PC-9 (cell line): ENCODE measurements at regions of chr1 and their contacts with region 1.

Region 1: GRCh38 chr1:232725305-232726047 is 79.7 kb upstream of the MAP10 start:
- DNase-seq: no peak
- H3K4me3 ChIP-seq: no peak overlapping the region
- H3K27ac ChIP-seq: no peak overlapping the region
- H3K4me1 ChIP-seq: peaks cover 14% of the 10 kb centered on the region; the same call in 1 of the 2 replicates
- H3K27me3 ChIP-seq: peaks cover 24% of the 10 kb centered on the region
- CTCF ChIP-seq: 0 out of 2 replicates have a peak, but pooled peaks have one; percentile 21

Region 2: DNA sequence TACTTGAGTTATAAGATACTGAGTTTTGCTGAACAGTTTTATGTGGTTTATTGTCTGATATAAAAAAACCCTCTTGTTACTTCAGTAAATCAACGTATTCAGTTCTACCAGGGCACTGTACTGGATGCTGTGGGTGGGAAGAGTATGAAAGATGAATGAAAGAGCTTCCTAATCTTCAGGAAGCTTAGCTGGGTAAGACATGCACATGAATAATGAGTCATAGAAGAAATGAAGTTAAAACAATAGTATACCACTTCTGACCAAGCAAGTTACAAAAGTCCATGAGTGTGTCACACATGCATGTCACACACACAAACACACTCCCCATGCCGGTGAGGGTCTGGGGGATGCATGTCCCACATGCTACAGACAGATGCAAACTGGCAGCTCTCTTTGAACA is 201.4 kb before region 1 on chr1:
- CTCF ChIA-PET with region 1: no interaction called
- POLR2A ChIA-PET with region 1: interaction called, 23 read pairs
- intact Hi-C with region 1: no loop called
- DNase-seq: no peak
- H3K4me3 ChIP-seq: no peak overlapping the region
- H3K27ac ChIP-seq: no peak overlapping the region
- H3K4me1 ChIP-seq: peaks cover 10% of the 10 kb centered on the region
- H3K27me3 ChIP-seq: no peaks in the 10 kb centered on the region
- CTCF ChIP-seq: no peak

Region 3: DNA sequence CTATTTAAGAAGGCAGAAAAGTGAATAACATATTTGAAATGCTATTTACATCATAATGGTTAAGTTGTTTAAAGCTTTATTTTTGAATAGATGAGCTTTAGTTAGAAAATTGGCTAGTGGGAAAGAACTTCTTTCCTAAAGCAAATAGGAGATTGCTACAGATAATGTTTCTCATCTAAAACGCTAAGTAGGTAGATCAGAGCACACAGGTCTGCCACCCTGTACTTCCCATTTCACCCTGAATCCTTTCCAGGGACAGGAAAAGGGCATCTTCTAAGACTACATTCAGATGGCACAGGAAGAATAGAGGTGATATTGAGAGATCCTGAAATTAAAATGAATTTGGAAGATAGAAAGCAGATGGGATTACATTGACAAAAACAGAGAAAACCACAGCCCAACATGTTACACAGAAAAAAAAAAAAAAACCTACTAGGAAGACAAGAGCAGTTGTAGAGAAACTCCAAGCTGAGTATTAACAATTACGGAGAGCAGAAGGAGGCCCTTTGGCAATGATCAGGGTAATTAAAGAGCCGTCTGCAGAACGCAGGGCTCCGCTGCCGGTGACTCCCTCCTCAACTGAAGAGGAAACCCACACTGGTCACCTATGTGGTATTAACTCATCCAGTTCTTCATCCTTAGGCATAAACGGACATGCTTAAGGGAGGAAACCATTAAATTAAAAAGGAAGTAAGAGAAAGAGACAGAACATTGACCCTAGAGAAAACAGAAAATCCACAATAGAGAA is 26.1 kb after region 1 on chr1:
- CTCF ChIA-PET with region 1: no interaction called
- POLR2A ChIA-PET with region 1: no interaction called
- intact Hi-C with region 1: no loop called
- DNase-seq: no peak
- H3K4me3 ChIP-seq: no peak overlapping the region
- H3K27ac ChIP-seq: no peak overlapping the region
- H3K4me1 ChIP-seq: no peaks in the 10 kb centered on the region
- H3K27me3 ChIP-seq: no peaks in the 10 kb centered on the region
- CTCF ChIP-seq: no peak

Region 4: GRCh38 chr1:232904566-232904965 is 179.1 kb after region 1 on chr1:
- CTCF ChIA-PET with region 1: no interaction called
- POLR2A ChIA-PET with region 1: no interaction called
- intact Hi-C with region 1: no loop called
- DNase-seq: no peak
- H3K4me3 ChIP-seq: no peak overlapping the region
- H3K27ac ChIP-seq: no peak overlapping the region
- H3K4me1 ChIP-seq: no peaks in the 10 kb centered on the region
- H3K27me3 ChIP-seq: 0 out of 2 replicates have a peak, but pooled peaks cover 4% of the 10 kb centered on the region
- CTCF ChIP-seq: no peak

Region 5: DNA sequence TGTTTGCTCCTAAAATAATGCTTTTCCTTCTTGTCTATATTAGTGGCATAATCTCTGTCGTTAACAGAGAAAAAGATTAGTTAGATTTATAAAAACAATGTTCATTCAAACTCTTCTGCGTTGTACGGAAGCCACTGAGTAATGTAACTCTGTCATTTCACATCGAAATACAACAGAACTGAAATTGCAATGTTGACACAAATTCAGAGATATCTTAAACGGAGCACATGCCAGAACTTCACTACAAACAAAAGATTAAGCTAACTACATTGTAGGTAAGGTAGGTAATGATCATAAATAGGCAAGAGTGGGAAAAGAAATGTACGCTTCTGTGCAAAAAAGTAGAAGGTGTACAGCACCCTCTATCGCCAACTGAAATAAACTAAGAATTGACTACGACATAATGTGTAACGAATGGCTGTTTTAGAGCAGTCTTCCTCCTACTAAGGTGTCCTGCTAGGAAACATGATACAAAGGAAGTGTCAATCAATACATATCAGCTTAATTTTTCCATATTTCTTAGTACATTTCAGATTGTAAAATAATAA is 513.5 kb after region 1 on chr1:
- CTCF ChIA-PET with region 1: no interaction called
- POLR2A ChIA-PET with region 1: no interaction called
- intact Hi-C with region 1: no loop called
- DNase-seq: no peak
- H3K4me3 ChIP-seq: no peak overlapping the region
- H3K27ac ChIP-seq: no peak overlapping the region
- H3K4me1 ChIP-seq: no peaks in the 10 kb centered on the region
- H3K27me3 ChIP-seq: no peaks in the 10 kb centered on the region
- CTCF ChIP-seq: no peak